B cell (primary cell): ENCODE measurements at regions of chr16 and their contacts with region 1.

Region 1: GRCh38 chr16:22374311-22375116 is at the start of gene CDR2:
- DNase-seq: peak; percentile 97
- ATAC-seq: peak; percentile 96
- H3K4me3 ChIP-seq: peak within 1 kb of the TSS; percentile 8 to 92 (median 80)
- H3K4me3 Mint-ChIP-seq: peak within 1 kb of the TSS; percentile 98
- H3K27ac ChIP-seq: peak within 1 kb of the TSS in 1 of 2 donors; percentile 54
- H3K27ac Mint-ChIP-seq: peak within 1 kb of the TSS; percentile 84
- H3K4me1 ChIP-seq: peaks cover 14 to 15% of the 10 kb centered on the region in 2 donors
- H3K4me1 Mint-ChIP-seq: peaks cover 20% of the 10 kb centered on the region
- H3K27me3 ChIP-seq: no peaks in the 10 kb centered on the region
- H3K27me3 Mint-ChIP-seq: no peaks in the 10 kb centered on the region
- CTCF ChIP-seq: no peak
- total RNA-seq, gene CDR2: 10.5 and 11.3 TPM in 2 replicates

Region 2: DNA sequence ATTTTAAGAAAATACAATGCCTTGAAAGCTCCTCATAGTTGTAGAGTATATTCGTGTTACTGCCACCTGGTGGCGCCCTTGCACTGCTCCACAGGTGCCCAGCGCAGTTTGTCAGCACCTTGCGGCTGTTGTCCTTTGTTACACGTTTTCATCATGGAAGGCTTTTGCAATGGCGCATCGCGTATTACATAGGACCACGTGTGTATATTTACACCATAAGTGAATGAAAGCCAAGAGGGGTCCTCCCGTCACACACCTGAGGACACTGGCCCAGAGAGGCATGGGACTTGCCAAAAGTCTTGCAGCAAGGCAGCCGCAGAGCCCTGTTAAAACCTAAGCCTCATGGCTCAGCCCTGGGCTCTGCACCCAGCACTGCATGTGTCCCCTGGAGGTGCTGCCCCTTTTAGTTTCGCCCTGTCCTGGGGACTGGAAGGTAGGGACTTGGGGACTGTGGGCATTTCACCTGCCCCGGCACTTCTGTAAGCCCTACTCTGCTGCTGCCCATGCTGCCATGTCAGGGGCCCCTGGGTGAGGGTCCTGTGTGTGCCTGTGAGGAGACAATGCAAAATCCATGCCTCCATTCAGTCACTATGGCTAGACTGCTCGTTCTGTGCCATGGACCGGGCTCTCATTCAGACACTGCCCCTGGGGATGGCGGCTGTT is 53.0 kb before region 1 on chr16:
- CTCF ChIA-PET with region 1: interaction called, 4 read pairs
- POLR2A ChIA-PET with region 1: no interaction called
- intact Hi-C with region 1: loop called (anchors 2 kb)
- DNase-seq: peak; percentile 74
- ATAC-seq: peak; percentile 66
- H3K4me3 ChIP-seq: no peak overlapping the region
- H3K4me3 Mint-ChIP-seq: no peak overlapping the region
- H3K27ac ChIP-seq: no peak overlapping the region
- H3K27ac Mint-ChIP-seq: no peak overlapping the region
- H3K4me1 ChIP-seq: no peaks in the 10 kb centered on the region
- H3K4me1 Mint-ChIP-seq: no peaks in the 10 kb centered on the region
- H3K27me3 ChIP-seq: no peaks in the 10 kb centered on the region
- H3K27me3 Mint-ChIP-seq: no peaks in the 10 kb centered on the region
- CTCF ChIP-seq: peak; percentile 97

Region 3: GRCh38 chr16:22356930-22357634 is 17.4 kb before region 1 on chr16:
- CTCF ChIA-PET with region 1: interaction called, 3 read pairs
- POLR2A ChIA-PET with region 1: no interaction called
- intact Hi-C with region 1: loop called (anchors 2 kb)
- DNase-seq: no peak
- ATAC-seq: peak; percentile 22
- H3K4me3 ChIP-seq: peak overlapping the region in 1 of 5 experiments; percentile 27
- H3K4me3 Mint-ChIP-seq: peak overlapping the region; percentile 44
- H3K27ac ChIP-seq: no peak overlapping the region
- H3K27ac Mint-ChIP-seq: peak overlapping the region; percentile 78
- H3K4me1 ChIP-seq: peaks cover 14 to 26% of the 10 kb centered on the region in 2 donors
- H3K4me1 Mint-ChIP-seq: peaks cover 31% of the 10 kb centered on the region
- H3K27me3 ChIP-seq: no peaks in the 10 kb centered on the region
- H3K27me3 Mint-ChIP-seq: no peaks in the 10 kb centered on the region
- CTCF ChIP-seq: no peak

Region 4: DNA sequence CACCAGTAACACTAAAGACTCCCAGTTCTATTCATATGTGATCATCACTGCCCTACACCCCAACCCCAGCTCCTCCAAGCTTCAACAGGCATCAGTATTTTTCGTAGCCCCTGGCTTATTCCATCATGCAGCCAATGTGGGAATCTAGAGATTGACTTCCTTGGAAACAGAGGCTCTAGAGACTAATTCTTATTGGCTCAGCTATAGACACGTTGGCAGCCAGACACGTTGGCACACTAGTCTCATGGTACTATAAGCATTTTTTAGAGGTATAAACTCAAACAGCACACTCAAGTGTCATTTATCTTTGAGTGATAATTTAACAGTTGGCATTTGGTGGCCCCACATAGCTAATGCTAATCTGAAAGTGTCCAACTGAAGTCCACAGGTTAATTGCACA is 44.3 kb after region 1 on chr16:
- CTCF ChIA-PET with region 1: no interaction called
- POLR2A ChIA-PET with region 1: interaction called, 12 read pairs
- intact Hi-C with region 1: no loop called
- DNase-seq: no peak
- ATAC-seq: no peak
- H3K4me3 ChIP-seq: no peak overlapping the region
- H3K4me3 Mint-ChIP-seq: no peak overlapping the region
- H3K27ac ChIP-seq: no peak overlapping the region
- H3K27ac Mint-ChIP-seq: no peak overlapping the region
- H3K4me1 ChIP-seq: no peaks in the 10 kb centered on the region
- H3K4me1 Mint-ChIP-seq: no peaks in the 10 kb centered on the region
- H3K27me3 ChIP-seq: no peaks in the 10 kb centered on the region
- H3K27me3 Mint-ChIP-seq: no peaks in the 10 kb centered on the region
- CTCF ChIP-seq: no peak